ENCODE measurements at regions of chr2 and their contacts with region 1.

Region 1: DNA sequence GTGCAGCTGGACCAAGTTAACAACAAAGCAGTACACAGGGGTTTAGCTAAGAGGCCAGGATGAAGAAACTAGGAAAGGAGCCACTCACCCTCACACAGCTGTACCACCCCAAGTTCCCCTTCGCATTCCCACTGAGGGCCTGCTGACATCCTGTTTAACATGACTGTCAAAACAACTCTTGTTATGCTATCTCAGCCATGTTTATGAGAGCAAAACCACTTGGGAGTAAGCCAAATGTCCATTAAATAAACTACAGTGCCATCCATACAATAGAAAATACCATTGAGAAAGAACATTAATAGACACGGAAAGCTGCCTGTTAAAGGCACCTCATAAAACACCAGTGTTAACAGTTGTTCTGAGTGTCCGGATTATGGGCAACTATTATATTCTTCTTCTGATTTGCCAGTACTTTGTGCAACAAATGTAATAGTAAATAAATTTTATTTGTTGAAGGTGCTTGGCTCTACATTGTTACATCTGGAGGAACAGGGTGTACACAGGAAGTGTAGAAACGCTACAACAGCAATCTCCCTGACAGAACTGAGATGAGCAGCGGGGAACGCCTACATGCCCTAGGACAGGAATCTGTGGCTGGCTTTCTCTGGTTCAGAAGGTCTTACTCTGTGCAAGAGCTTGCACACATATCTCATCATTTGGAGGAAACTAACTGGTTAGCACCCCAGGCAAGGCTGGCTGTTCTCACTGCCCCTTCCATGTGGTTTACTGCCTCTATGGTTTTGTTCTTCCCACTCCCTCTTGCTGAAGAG is 85.6 kb downstream of the EHD3 start:
- DNase-seq: no peak
- ATAC-seq: peak; percentile 28 to 78

Region 2: DNA sequence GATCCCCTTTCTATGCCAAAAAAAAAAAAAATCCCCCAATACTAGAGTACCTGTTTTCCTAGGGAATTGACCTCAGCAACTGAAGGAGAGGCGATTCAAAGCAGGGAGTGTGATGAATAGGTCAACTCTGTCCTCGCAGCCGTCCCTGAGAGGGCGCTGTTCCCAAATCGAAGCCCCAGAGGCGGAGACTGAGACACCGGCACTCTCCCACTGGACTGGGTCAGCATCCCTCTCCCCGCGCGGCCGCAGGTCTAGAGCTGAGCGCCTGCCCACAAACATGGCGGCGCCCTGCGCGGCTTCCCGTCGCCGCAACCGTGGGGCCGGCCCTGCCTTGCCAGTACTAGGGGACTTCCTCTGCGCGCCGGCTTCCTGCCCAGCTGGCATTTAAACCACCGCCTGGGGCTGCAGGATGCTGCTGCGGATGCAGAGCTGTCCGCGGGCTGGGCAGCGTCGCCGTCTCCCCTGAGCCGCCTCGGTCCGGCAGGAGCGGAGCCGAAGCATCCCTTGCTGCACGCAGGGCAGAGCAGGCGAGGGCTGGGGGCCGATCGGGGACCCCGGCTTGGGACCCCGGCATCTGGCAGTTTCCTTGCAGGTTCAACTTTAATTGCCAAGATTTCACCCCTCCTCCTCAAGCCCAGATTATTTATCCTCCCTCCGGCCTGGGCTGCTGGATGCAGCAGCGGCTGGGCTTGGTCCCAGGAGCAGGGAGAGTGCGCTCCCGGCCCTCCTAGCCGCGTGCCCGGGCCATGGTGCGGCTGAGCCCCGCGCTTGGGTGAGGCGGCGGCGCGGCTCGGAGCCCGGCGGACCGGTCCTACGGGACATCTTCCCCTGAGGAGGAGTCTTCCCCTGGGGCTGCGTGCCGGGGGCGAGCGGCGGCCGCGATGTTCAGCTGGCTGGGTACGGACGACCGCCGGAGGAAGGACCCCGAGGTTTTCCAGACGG is 85.6 kb before region 1 on chr2 and contains the start of gene EHD3:
- intact Hi-C with region 1: loop called in 1 of 2 experiments (anchors 5 kb)
- DNase-seq: peak; percentile 91
- ATAC-seq: peak; percentile 96 to 98
- total RNA-seq, gene EHD3: 8.1 to 11.7 TPM

Region 3: GRCh38 chr2:31523871-31524492 is 204.4 kb after region 1 on chr2:
- intact Hi-C with region 1: no loop called
- DNase-seq: no peak
- ATAC-seq: no peak